IMR-90 (cell line): ENCODE measurements at regions of chr3 and their contacts with region 1.

Region 1: GRCh38 chr3:38346587-38347410 is at the start of gene XYLB:
- DNase-seq: peak; percentile 72
- ATAC-seq: peak; percentile 99
- H3K4me3 ChIP-seq: peak within 1 kb of the TSS; percentile 83
- H3K27ac ChIP-seq: peak within 1 kb of the TSS; percentile 30; the same call in 1 of the 2 replicates
- H3K4me1 ChIP-seq: no peaks in the 10 kb centered on the region
- H3K27me3 ChIP-seq: no peaks in the 10 kb centered on the region
- CTCF ChIP-seq: peak; percentile 85
- POLR2A ChIP-seq: no peak
- RAD21 ChIP-seq: peak; percentile 59
- total RNA-seq, gene XYLB: 2.5 and 3.0 TPM in 2 replicates

Region 2: DNA sequence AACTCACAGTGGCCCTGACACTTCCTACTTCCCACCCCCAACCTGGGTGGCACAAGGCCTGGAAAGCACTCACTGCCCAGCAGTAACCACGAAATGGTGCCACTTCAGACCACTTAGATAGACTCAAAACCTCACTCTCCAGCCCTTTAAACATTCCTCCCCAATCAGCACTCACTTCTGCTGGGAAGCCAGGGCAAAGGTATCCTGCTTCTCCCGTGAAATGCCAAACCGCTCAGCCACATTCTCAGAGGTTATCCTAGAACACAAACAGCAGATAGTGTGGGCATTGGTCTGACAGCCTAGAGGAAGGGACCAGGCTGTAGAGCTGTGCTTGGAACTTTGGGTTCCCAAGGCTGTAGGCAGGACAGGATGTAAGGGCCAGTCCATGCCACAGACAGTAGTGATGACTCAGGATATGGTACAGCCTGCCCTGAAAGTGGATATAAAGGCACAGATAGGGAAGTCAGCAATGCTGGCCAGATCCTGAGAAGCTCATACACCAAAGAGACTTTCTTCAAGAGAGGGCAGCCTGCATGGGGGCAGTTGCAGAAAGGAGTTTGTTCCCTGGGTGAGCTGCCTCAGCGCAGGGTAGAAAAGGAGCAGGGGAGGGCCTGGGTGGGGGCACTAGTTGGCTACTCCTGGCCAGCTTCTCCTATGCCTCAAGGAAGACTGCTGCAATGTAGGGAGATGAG is 219.0 kb before region 1 on chr3:
- CTCF ChIA-PET with region 1: no interaction called
- POLR2A ChIA-PET with region 1: no interaction called
- dilution Hi-C with region 1: no loop called
- in situ Hi-C with region 1: loop called (anchors 10 kb)
- intact Hi-C with region 1: no loop called
- DNase-seq: no peak
- ATAC-seq: no peak
- H3K4me3 ChIP-seq: no peak overlapping the region
- H3K27ac ChIP-seq: no peak overlapping the region
- H3K4me1 ChIP-seq: no peaks in the 10 kb centered on the region
- H3K27me3 ChIP-seq: no peaks in the 10 kb centered on the region
- CTCF ChIP-seq: no peak
- POLR2A ChIP-seq: no peak
- RAD21 ChIP-seq: no peak

Region 3: GRCh38 chr3:38147421-38147820 is 199.4 kb before region 1 on chr3:
- CTCF ChIA-PET with region 1: no interaction called
- POLR2A ChIA-PET with region 1: no interaction called
- dilution Hi-C with region 1: no loop called
- in situ Hi-C with region 1: no loop called
- intact Hi-C with region 1: no loop called
- DNase-seq: no peak
- ATAC-seq: no peak
- H3K4me3 ChIP-seq: no peak overlapping the region
- H3K27ac ChIP-seq: no peak overlapping the region
- H3K4me1 ChIP-seq: no peaks in the 10 kb centered on the region
- H3K27me3 ChIP-seq: no peaks in the 10 kb centered on the region
- CTCF ChIP-seq: no peak
- POLR2A ChIP-seq: no peak
- RAD21 ChIP-seq: no peak

Region 4: DNA sequence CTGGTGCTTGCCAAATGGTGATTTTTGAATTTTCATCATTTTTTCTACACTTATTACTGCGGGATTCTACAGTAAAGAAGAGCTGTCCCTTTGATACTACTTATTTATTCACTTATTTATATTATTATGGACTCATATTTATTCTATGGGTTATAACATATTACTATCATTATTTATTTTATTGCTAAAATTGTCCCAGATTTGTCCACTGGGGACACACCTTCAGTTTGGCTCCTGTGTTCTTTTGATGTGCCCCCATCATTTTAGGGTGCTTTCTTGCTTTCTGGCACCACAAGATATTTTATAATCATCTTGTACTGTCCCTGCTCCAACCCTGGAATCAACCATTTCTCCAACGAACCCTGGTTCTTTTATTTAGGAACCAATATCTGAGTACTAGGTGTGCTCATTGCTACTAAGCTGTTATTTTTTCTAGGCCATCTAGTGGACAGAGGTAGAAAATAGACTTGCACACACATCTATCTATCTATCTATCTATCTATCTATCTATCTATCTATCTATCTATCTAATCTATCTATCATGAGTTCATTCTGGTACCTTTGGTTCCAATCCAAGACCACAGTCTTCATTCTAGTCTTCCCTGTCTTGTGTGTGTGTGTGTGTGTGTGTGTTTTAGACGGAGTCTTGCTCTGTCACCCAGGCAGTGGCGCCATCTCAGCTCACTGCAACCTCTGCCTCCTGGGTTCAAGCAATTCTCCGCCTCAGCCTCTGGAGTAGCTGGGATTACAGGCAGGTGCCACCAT is 48.7 kb before region 1 on chr3:
- CTCF ChIA-PET with region 1: no interaction called
- POLR2A ChIA-PET with region 1: no interaction called
- dilution Hi-C with region 1: no loop called
- in situ Hi-C with region 1: no loop called
- intact Hi-C with region 1: loop called (anchors 2 kb)
- DNase-seq: peak; percentile 29
- ATAC-seq: peak; percentile 80
- H3K4me3 ChIP-seq: no peak overlapping the region
- H3K27ac ChIP-seq: no peak overlapping the region
- H3K4me1 ChIP-seq: no peaks in the 10 kb centered on the region
- H3K27me3 ChIP-seq: peaks cover under 1% of the 10 kb centered on the region; the same call in 1 of the 2 replicates
- CTCF ChIP-seq: peak; percentile 41
- POLR2A ChIP-seq: no peak
- RAD21 ChIP-seq: peak; percentile 24; the same call in 1 of the 2 replicates

Region 5: GRCh38 chr3:38454884-38455638 is 108.3 kb after region 1 on chr3:
- CTCF ChIA-PET with region 1: no interaction called
- POLR2A ChIA-PET with region 1: no interaction called
- dilution Hi-C with region 1: no loop called
- in situ Hi-C with region 1: no loop called
- intact Hi-C with region 1: loop called (anchors 5 kb)
- DNase-seq: peak; percentile 27
- ATAC-seq: peak; percentile 50
- H3K4me3 ChIP-seq: peak overlapping the region; percentile 97
- H3K27ac ChIP-seq: peak overlapping the region; percentile 22; the same call in 1 of the 2 replicates
- H3K4me1 ChIP-seq: peaks cover 3% of the 10 kb centered on the region; the same call in 1 of the 2 replicates
- H3K27me3 ChIP-seq: no peaks in the 10 kb centered on the region
- CTCF ChIP-seq: no peak
- POLR2A ChIP-seq: no peak
- RAD21 ChIP-seq: no peak